ENCODE measurements at regions of chr2 and their contacts with region 1.

Region 1: DNA sequence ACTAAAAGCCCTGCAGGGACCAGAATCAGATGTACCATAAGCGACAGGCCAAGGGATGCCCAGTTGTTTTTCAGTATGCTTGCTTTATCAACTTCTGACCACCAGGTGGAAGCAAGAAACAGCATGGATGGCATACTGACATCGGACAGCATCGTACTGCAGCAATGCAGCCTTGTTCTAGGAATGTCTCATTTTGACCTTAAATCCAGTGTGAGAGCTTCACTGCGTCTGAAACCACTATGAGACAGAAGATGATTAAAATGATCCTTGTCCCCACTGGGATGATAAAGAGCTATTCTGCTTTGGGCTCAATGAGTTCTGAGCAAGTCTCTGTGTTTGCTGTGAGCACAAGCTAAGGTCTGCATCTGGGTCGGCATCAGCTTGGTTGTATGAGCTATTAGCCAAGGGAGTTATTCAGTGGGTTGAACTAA is 54.3 kb downstream of the CDK15 start:
- DNase-seq: peak; percentile 72

Region 2: GRCh38 chr2:201807452-201807999 is 53.1 kb before region 1 on chr2:
- CTCF ChIA-PET with region 1: interaction called, 11 read pairs
- POLR2A ChIA-PET with region 1: no interaction called
- DNase-seq: peak; percentile 53

Region 3: DNA sequence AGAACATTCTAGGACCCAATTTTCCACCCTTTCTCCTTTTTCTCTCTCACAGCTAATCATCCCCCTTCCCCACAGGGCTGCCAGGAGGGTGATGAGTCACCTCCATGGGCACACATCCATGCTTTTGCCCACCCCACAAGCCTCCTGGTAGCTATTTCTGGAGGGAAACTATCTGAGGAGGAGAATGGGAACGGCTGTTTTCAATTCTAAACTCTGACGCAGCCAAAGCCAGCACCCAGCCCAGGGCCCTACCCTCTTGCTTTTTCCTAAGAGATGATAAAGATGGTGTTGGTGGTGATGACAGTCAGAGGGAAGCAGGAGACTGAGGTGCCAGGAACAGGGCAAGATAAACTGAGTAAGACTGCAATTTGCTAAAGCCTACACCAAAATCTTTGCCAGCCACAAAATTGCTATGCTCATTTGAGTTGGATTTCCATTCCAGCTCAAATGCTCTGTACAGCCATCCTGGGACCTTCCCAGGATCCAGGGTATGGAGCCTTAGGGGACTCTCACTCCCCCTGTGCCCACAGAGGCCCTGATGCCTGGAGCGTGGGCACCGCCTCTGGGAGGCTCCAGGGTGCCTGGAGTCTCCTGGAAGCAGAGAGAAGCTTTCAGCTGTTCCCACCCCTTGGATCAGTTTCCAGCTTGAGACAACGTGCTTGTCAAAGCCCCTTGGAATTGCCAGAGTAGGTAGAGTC is 111.0 kb after region 1 on chr2:
- CTCF ChIA-PET with region 1: no interaction called
- POLR2A ChIA-PET with region 1: no interaction called
- DNase-seq: no peak